HAP-1 (cell line): ENCODE measurements at regions of chr4 and their contacts with region 1.

Region 1: DNA sequence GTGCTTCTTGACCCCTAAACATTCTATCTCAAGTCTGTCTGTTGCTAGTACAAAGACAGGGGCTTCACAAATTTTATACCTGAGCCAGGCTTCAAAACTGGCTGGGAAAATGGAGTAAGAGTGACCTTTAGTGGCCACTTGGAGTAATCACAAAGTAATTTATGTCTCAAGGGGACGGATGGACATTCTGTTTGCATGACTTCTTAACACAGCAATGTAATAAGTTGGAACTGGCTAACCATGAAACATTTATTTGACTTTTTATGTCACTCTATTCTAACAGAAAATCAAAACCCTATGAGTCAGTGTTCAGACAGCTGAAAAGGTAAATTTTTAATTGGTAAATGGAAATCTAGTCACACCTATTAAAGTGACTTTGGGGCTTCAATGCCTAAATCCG is 600.6 kb downstream of the ANKRD50 start:
- DNase-seq: peak; percentile 42 to 79
- H3K4me3 ChIP-seq: no peak overlapping the region
- H3K4me1 ChIP-seq: no peaks in the 10 kb centered on the region
- H3K27me3 ChIP-seq: no peaks in the 10 kb centered on the region

Region 2: DNA sequence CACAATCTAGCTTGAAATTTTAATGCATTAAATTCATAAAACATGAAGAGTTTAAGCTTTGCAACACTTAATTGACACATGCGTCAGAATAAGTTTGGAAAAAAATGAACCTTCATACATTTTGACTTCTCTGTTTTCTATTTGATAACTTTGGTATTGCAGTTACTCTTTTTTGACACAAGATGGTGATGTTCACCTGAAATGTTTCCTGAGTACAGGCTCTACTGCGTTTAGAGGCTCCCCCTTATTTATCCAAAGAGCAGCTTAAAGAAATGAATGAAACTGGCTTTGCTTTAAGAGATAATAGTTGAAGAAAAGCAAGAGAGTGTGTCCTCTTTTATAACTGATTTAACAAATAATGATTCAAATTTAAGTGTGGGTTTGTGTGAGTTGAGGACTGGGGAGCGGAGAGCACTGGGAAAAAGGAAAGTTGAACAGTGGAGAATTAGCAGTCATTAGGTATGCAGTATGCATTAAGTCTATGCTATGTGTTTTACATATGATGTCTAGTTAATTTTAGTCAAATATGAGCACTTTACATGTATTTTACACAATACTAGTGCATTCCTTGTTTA is 1008.9 kb before region 1 on chr4:
- in situ Hi-C with region 1: loop called (anchors 25 kb)
- DNase-seq: peak in 1 of 2 experiments; percentile 45
- H3K4me3 ChIP-seq: no peak overlapping the region
- H3K4me1 ChIP-seq: peaks cover 3% of the 10 kb centered on the region; the same call in 1 of the 2 replicates
- H3K27me3 ChIP-seq: no peaks in the 10 kb centered on the region

Region 3: DNA sequence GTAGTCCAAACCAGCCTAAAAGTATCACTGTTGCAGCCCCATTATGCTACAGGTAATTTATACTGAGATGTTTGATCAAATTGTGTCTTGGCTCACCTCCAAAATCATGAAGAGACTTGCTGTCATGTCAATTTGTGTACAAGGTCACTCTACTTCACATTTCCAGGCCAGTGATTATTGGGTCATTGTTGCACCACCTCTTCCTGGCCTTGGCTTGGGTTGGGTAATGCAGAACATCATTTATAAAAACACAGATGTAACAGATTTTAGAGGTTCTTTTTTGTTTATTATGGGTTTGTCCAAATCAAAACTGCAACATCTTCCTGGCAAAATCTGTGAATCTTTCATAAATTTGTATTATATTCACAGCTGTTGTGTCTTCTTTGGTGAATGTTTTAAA is 141.2 kb after region 1 on chr4:
- in situ Hi-C with region 1: no loop called
- DNase-seq: no peak
- H3K4me3 ChIP-seq: no peak overlapping the region
- H3K4me1 ChIP-seq: no peaks in the 10 kb centered on the region
- H3K27me3 ChIP-seq: no peaks in the 10 kb centered on the region

Region 4: DNA sequence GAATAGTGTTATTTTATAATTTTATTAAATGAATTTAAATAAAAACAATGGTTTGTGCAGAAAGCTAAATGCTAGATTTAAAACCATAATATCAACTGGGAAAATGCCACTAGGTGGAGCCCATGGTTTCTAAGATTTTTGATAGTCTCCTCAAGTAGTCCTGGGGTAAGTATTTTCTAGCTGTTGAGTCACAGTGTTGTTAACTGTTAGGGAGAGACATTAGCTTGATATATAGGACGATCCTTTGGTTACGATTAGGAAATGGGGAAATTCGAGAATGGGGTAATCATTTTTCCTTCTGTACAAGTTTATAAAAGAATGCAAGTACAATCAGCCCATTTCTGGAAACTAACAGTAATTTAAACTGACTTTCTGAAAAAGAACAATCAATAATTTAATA is 222.2 kb after region 1 on chr4:
- in situ Hi-C with region 1: no loop called
- DNase-seq: peak; percentile 61 to 73
- H3K4me3 ChIP-seq: no peak overlapping the region
- H3K4me1 ChIP-seq: no peaks in the 10 kb centered on the region
- H3K27me3 ChIP-seq: no peaks in the 10 kb centered on the region